BJ (cell line): ENCODE measurements at regions of chr2 and their contacts with region 1.

Region 1: GRCh38 chr2:59182249-59182648 is 941.1 kb upstream of the FANCL start:
- DNase-seq: peak; percentile 9
- H3K4me3 ChIP-seq: no peak overlapping the region
- H3K27me3 ChIP-seq: no peaks in the 10 kb centered on the region
- CTCF ChIP-seq: peak; percentile 69

Region 2: DNA sequence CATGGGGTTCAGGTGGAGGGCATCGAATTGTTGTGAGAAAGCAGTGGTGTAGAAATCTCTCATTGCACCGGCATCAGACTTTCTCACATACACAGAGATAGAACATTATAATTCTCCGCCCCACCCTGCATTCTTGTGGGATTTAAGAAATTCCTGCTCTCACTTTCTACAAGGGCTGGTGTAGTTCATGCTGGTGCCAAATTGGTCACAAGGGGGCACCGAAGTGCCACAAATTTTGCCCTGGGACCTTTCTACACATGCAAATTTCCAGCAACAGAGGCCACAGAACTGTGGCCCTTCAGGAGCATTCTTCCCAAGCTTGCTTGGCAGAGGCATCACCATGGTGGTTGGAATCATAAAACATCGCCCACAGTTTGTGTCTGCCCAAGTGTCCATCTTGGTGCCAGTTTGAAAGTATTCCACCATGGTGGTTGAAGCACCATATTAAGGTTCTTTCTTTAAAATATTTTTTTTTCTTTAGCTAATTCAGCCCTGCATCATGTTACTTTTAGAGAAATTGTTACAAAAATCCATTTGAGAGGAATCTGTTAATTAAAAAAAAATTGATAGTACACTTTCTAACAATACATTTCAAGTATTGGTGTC is 420.0 kb before region 1 on chr2:
- CTCF ChIA-PET with region 1: interaction called, 11 read pairs
- POLR2A ChIA-PET with region 1: no interaction called
- DNase-seq: peak; percentile 25
- H3K4me3 ChIP-seq: no peak overlapping the region
- H3K27me3 ChIP-seq: peaks cover 2% of the 10 kb centered on the region; the same call in 1 of the 2 replicates
- CTCF ChIP-seq: peak; percentile 68

Region 3: DNA sequence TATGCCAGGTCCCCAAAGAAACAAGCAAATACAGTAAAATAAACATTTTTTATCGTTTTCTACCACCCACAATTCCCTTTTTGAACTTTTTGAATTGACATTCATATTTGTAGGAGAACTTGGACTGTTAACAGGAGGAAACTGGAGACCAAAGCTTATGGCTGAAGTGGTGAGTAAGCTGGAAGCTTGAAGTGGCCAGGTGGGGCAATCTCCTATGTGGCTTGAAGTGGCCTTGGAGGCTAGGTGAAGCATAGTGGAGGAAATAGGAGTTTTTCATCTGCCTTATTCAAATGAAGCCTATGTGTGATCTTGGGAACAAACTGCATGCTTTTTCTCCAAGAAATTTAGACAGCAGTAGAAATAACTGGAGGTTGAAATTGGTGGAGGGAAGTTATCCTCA is 21.8 kb after region 1 on chr2:
- CTCF ChIA-PET with region 1: no interaction called
- POLR2A ChIA-PET with region 1: no interaction called
- DNase-seq: no peak
- H3K4me3 ChIP-seq: no peak overlapping the region
- H3K27me3 ChIP-seq: no peaks in the 10 kb centered on the region
- CTCF ChIP-seq: no peak

Region 4: GRCh38 chr2:59301466-59302402 is 119.5 kb after region 1 on chr2:
- CTCF ChIA-PET with region 1: no interaction called
- POLR2A ChIA-PET with region 1: no interaction called
- DNase-seq: peak; percentile 26
- H3K4me3 ChIP-seq: no peak overlapping the region
- H3K27me3 ChIP-seq: no peaks in the 10 kb centered on the region
- CTCF ChIP-seq: peak; percentile 63